K562 (cell line): ENCODE measurements at regions of chr3 and their contacts with region 1.

Region 1: GRCh38 chr3:196246612-196247308 is 30.4 kb downstream of the SLC51A start:
- DNase-seq: no peak
- ATAC-seq: no peak
- H3K4me3 ChIP-seq: no peak overlapping the region
- H3K27ac ChIP-seq: no peak overlapping the region
- H3K4me1 ChIP-seq: no peaks in the 10 kb centered on the region
- H3K27me3 ChIP-seq: no peaks in the 10 kb centered on the region
- CTCF ChIP-seq: no peak
- EP300 ChIP-seq: no peak
- POLR2A ChIP-seq: no peak
- RAD21 ChIP-seq: no peak

Region 2: DNA sequence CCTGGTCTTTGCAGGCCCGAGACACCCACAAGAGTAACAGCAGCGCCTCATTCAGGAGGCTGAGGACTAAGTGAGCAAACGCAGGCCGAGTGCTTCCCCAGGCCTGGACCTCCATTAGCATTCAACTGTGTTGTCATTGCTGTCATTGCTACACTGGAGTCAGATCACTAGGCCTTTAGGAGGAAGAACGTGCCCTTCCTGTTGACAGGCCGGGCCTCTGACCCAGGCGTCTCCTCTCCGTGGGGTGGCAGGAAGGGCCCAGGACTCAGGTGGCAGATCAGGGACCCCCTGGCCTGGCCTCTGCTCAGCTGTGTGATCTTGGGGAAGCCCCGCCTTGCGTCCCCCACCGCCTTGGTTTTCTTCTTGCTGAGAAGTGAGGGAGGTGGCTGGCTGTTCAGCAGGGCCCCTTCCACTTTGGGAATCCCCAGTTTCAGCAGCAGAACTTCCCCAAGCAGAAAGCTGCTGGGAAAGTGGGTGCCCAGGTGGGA is 54.7 kb before region 1 on chr3:
- CTCF ChIA-PET with region 1: no interaction called
- POLR2A ChIA-PET with region 1: no interaction called
- in situ Hi-C with region 1: no loop called
- intact Hi-C with region 1: no loop called
- DNase-seq: peak in 1 of 4 experiments; percentile 34
- ATAC-seq: no peak
- H3K4me3 ChIP-seq: no peak overlapping the region
- H3K27ac ChIP-seq: peak overlapping the region; percentile 62; the same call in 2 of the 3 replicates
- H3K4me1 ChIP-seq: peaks cover 46 to 83% of the 10 kb centered on the region in 2 experiments
- H3K27me3 ChIP-seq: no peaks in the 10 kb centered on the region
- CTCF ChIP-seq: no peak
- EP300 ChIP-seq: no peak
- POLR2A ChIP-seq: no peak
- RAD21 ChIP-seq: peak in 1 of 2 experiments; percentile 24; a peak in 1 of 4 replicates

Region 3: DNA sequence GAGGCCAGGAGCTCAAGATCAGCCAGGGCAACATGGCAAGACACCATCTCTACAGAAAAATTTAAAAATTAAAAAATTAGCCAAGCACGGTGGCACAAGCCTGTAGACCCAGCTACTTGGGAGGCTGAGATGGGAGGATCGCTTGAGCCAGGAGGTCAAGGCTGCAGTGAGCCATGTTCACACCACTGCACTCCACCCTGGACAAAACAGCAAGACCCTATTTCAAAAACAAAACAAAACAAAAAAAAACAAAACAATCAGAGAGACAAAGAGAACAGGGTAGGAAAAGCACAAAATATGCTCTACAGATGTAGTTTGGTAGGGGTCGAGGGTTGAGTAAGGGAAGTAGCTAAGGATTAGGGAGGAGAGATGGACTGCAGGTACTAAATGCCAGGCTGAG is 67.8 kb after region 1 on chr3:
- CTCF ChIA-PET with region 1: no interaction called
- POLR2A ChIA-PET with region 1: no interaction called
- in situ Hi-C with region 1: no loop called
- intact Hi-C with region 1: no loop called
- DNase-seq: no peak
- ATAC-seq: no peak
- H3K4me3 ChIP-seq: no peak overlapping the region
- H3K27ac ChIP-seq: no peak overlapping the region
- H3K4me1 ChIP-seq: peaks cover 4 to 15% of the 10 kb centered on the region in 2 experiments; a peak in 4 of 5 replicates
- H3K27me3 ChIP-seq: no peaks in the 10 kb centered on the region; a peak in 1 of 5 replicates
- CTCF ChIP-seq: no peak
- EP300 ChIP-seq: no peak
- POLR2A ChIP-seq: no peak
- RAD21 ChIP-seq: no peak

Region 4: DNA sequence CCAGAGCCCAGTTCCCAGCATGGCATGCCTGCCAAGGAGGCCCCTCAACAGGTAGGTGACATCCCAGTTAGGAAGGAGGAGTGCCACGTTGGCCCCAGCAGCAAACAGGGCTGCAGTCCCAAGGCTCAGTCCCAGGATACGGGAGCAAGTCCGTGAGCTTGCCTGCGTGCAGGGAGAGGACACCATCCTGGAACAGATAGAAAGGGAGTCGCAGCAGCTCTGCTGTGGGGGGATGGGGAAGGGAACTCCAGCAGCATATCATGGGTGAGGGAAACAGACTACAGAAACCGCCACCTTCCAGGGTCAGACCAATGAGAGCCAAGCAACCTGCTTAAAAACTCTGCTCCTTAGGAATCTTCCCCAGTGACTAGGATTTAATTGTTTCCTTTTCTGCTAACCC is 80.6 kb after region 1 on chr3:
- CTCF ChIA-PET with region 1: no interaction called
- POLR2A ChIA-PET with region 1: no interaction called
- in situ Hi-C with region 1: no loop called
- intact Hi-C with region 1: no loop called
- DNase-seq: no peak
- ATAC-seq: no peak
- H3K4me3 ChIP-seq: no peak overlapping the region
- H3K27ac ChIP-seq: no peak overlapping the region
- H3K4me1 ChIP-seq: peaks cover 0 to 4% of the 10 kb centered on the region in 2 experiments; a peak in 2 of 5 replicates
- H3K27me3 ChIP-seq: no peaks in the 10 kb centered on the region
- CTCF ChIP-seq: no peak
- EP300 ChIP-seq: no peak
- POLR2A ChIP-seq: no peak
- RAD21 ChIP-seq: no peak

Region 5: GRCh38 chr3:196454935-196455334 is 208.2 kb after region 1 on chr3:
- CTCF ChIA-PET with region 1: no interaction called
- POLR2A ChIA-PET with region 1: no interaction called
- in situ Hi-C with region 1: loop called (anchors 5 kb)
- intact Hi-C with region 1: no loop called
- DNase-seq: no peak
- ATAC-seq: no peak
- H3K4me3 ChIP-seq: no peak overlapping the region
- H3K27ac ChIP-seq: no peak overlapping the region
- H3K4me1 ChIP-seq: no peaks in the 10 kb centered on the region; a peak in 1 of 5 replicates
- H3K27me3 ChIP-seq: no peaks in the 10 kb centered on the region
- CTCF ChIP-seq: no peak
- EP300 ChIP-seq: no peak
- POLR2A ChIP-seq: no peak
- RAD21 ChIP-seq: no peak